ENCODE measurements at regions of chr12 and their contacts with region 1.

Region 1: DNA sequence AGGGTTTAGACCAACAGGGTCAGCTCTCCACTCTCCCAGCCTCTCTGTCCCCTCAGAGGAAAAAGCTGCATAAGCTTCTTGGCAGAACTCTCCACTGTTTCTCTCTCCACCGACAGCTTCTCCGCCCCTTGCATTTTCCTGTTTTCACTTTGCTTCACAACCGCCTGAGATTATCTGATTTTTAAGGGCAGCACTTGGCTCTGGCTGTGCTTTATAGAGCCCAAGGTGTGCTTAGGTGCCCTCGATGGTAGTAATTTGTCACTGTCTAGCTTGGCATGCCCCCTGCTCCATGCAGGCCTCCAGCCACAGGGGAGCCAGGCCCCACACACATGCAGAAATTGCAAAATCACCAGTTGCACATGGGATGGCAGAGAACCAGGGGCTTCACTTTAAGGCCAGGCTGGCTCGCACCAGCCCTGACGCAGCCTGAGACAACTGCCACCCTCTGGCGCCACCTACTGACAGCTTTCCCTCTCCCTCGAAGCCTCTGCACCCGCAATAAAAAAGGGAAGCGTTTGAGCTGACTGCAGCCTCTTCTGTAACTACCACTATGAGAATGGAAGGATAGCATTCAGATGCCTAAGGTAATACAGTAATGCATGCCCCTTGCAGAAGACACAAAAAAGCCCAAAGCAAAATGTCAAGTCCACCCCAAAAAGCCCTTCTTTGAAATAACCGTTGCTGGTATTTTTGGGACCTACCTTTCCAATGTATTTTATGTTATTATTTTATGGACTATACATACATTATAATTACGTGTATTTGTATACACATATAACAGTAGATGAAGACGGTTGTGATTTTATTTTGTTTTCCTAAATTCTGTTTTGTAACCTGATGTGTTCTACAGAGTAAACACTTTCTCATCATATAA is 32.0 kb upstream of the RIMBP2 start:
- DNase-seq: peak; percentile 25 to 39
- ATAC-seq: peak in 1 of 2 donors; percentile 62
- H3K4me3 ChIP-seq: no peak overlapping the region
- H3K27ac ChIP-seq: no peak overlapping the region
- H3K4me1 ChIP-seq: no peaks in the 10 kb centered on the region
- H3K27me3 ChIP-seq: peaks cover 0 to 5% (median 0%) of the 10 kb centered on the region in 3 donors
- CTCF ChIP-seq: peak; percentile 35 to 69 (median 55)
- POLR2A ChIP-seq: no peak

Region 2: DNA sequence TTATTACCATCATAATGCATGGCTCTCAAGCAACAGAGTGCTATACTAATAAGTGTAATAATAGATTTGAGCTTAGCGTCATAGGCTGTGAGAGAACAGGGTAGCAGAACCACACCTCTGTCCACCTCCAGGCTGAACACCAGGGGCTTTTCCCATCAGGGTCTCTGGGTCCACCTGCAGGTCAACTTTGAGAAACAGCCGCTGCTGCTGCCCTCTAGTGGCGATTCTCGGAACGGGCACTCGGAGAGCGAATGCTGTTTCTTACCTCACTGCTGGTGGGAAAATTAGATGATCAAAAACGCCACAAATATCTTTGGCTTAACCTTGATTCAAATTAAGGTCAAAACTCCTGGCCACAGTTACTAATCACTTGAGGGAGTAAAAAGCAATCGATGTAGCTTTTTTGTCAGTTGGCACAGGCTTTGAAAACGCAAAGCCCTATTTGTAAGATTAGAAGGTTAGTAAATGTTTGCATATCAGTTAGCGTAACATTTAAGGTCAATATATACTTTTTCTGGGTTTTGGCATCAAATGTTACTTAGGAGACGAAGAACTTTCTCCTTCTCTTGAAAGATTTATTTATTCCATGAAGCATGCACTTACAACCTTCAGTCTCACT is 716.4 kb before region 1 on chr12:
- in situ Hi-C with region 1: loop called in 1 of 4 experiments (anchors 25 kb)
- intact Hi-C with region 1: no loop called
- DNase-seq: no peak
- ATAC-seq: no peak
- H3K4me3 ChIP-seq: no peak overlapping the region
- H3K27ac ChIP-seq: no peak overlapping the region
- H3K4me1 ChIP-seq: no peaks in the 10 kb centered on the region
- H3K27me3 ChIP-seq: peaks cover 0 to 8% (median 0%) of the 10 kb centered on the region in 3 donors
- CTCF ChIP-seq: peak in 3 of 5 experiments; percentile 33 to 62 (median 49)
- POLR2A ChIP-seq: no peak

Region 3: GRCh38 chr12:130041983-130042812 is 705.9 kb before region 1 on chr12:
- in situ Hi-C with region 1: loop called in 1 of 4 experiments (anchors 25 kb)
- intact Hi-C with region 1: loop called (anchors 5 kb)
- DNase-seq: no peak
- ATAC-seq: no peak
- H3K4me3 ChIP-seq: no peak overlapping the region
- H3K27ac ChIP-seq: no peak overlapping the region
- H3K4me1 ChIP-seq: no peaks in the 10 kb centered on the region
- H3K27me3 ChIP-seq: peaks cover 3 to 23% (median 15%) of the 10 kb centered on the region in 3 donors
- CTCF ChIP-seq: peak in 4 of 5 experiments; percentile 40 to 64 (median 56)
- POLR2A ChIP-seq: no peak

Region 4: GRCh38 chr12:130401703-130402102 is 346.4 kb before region 1 on chr12:
- in situ Hi-C with region 1: loop called in 1 of 4 experiments (anchors 10 kb)
- intact Hi-C with region 1: loop called (anchors 5 kb)
- DNase-seq: no peak
- ATAC-seq: no peak
- H3K4me3 ChIP-seq: no peak overlapping the region
- H3K27ac ChIP-seq: no peak overlapping the region
- H3K4me1 ChIP-seq: no peaks in the 10 kb centered on the region
- H3K27me3 ChIP-seq: peaks cover 0 to 3% (median 0%) of the 10 kb centered on the region in 3 donors
- CTCF ChIP-seq: no peak
- POLR2A ChIP-seq: no peak

Region 5: DNA sequence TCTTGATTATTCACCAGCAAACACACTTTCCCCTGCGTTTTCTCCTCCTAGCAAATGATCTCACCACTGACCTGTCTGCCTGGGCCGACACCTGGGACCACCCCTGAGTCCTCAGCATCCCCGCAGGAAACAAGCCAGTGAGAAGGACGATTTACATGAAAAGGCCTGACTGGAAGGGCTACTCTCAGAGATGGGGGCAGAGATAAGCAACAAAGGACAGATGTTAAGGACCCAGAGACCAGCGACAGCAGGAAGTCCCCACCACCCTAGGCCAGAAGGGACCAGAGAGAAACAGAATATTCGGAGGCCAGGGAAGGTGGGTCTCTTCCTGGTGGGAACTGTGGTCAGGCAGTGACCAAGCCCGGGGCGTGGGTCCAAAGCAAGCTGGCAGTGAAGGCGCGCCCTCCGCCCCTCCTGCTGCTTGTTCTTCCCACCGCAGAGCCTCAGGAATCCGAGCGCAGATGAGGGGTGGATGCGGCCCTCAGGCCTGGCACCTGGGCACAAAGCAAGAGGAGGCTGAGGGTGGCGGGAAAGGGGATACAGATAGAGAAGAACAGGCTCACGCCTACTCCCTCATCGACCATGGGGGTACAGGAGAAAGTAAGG is 35.1 kb after region 1 on chr12:
- in situ Hi-C with region 1: no loop called
- intact Hi-C with region 1: no loop called
- DNase-seq: no peak
- ATAC-seq: no peak
- H3K4me3 ChIP-seq: no peak overlapping the region
- H3K27ac ChIP-seq: no peak overlapping the region
- H3K4me1 ChIP-seq: no peaks in the 10 kb centered on the region
- H3K27me3 ChIP-seq: peaks cover 0 to 3% (median 0%) of the 10 kb centered on the region in 3 donors
- CTCF ChIP-seq: no peak
- POLR2A ChIP-seq: no peak

Measured in gastrocnemius medialis (tissue), 4 donors.